ENCODE measurements at regions of chr19 and their contacts with region 1.

Region 1: DNA sequence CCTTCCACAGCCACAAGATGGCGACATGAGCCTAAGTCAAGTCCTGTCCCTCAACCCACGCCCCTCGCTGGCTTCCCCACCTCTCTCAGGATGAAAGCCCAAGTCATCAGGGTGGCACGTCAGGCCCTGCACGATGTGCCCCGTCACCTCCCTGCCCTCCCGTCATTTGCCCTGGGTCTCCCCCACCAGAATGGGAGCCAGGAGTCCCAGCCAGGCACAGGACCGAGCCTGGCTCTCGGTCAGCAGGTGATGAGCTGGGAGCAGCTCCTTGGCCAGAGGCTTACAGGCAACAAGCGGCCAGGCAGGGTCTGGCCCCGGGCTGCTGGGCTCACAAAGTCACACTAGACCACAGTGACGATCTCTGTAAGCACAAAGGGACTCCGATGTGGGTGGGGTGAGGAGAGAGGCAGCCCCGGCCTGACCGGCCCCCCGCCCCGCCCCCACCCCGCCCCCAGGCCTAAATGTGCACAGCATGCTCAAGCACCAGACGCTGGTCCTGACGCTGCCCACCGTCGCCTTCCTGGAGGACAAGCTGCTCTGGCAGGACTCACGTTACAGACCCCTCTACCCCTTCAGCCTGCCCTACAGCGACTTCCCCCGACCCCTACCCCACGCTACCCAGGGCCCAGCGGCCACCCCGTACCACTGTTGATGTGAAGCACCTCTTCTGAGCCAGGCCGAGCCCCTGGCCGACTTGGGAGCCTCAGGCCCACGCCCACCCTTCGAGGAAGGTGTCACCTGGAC is 7.3 kb downstream of the MRPL4 start:
- DNase-seq: peak; percentile 79 to 90
- ATAC-seq: peak; percentile 50 to 83 (median 66)
- H3K4me3 ChIP-seq: no peak overlapping the region
- H3K27ac ChIP-seq: peak overlapping the region in 4 of 10 donors; percentile 18 to 39 (median 30)
- H3K4me1 ChIP-seq: peaks cover 0 to 15% (median 4%) of the 10 kb centered on the region in 9 donors
- H3K27me3 ChIP-seq: no peaks in the 10 kb centered on the region
- CTCF ChIP-seq: peak; percentile 59 to 82 (median 76)

Region 2: GRCh38 chr19:10279737-10280442 is 20.6 kb after region 1 on chr19:
- intact Hi-C with region 1: no loop called
- DNase-seq: no peak
- ATAC-seq: no peak
- H3K4me3 ChIP-seq: no peak overlapping the region
- H3K27ac ChIP-seq: no peak overlapping the region
- H3K4me1 ChIP-seq: peaks cover 0 to 29% (median 0%) of the 10 kb centered on the region in 9 donors
- H3K27me3 ChIP-seq: no peaks in the 10 kb centered on the region
- CTCF ChIP-seq: no peak

Region 3: GRCh38 chr19:10388957-10389356 is 129.6 kb after region 1 on chr19:
- intact Hi-C with region 1: loop called in 5 of 10 experiments (anchors 2 kb)
- DNase-seq: peak; percentile 87 to 92
- ATAC-seq: peak; percentile 46 to 76 (median 70)
- H3K4me3 ChIP-seq: no peak overlapping the region
- H3K27ac ChIP-seq: no peak overlapping the region
- H3K4me1 ChIP-seq: peaks cover 0 to 28% (median 5%) of the 10 kb centered on the region in 9 donors
- H3K27me3 ChIP-seq: no peaks in the 10 kb centered on the region
- CTCF ChIP-seq: peak; percentile 90 to 96 (median 94)